CD4-positive, alpha-beta memory T cell (primary cell): ENCODE measurements at regions of chr12 and their contacts with region 1.

Region 1: GRCh38 chr12:104456417-104456949 is at the start of gene CHST11:
- DNase-seq: peak; percentile 66 to 85 (median 70)
- H3K4me3 ChIP-seq: peak within 1 kb of the TSS; percentile 72 to 99
- H3K4me3 Mint-ChIP-seq: peak within 1 kb of the TSS; percentile 98 to 100 (median 99)
- H3K27ac ChIP-seq: peak within 1 kb of the TSS; percentile 83
- H3K27ac Mint-ChIP-seq: peak within 1 kb of the TSS; percentile 85 to 98 (median 96)
- H3K4me1 ChIP-seq: peaks cover 34% of the 10 kb centered on the region
- H3K4me1 Mint-ChIP-seq: peaks cover 28 to 66% (median 39%) of the 10 kb centered on the region in 4 donors
- H3K27me3 ChIP-seq: no peaks in the 10 kb centered on the region
- H3K27me3 Mint-ChIP-seq: no peaks in the 10 kb centered on the region
- total RNA-seq, gene CHST11: 55.1 to 55.8 TPM

Region 2: GRCh38 chr12:104026841-104027599 is 429.5 kb before region 1 on chr12:
- CTCF ChIA-PET with region 1: no interaction called
- POLR2A ChIA-PET with region 1: no interaction called
- intact Hi-C with region 1: no loop called
- DNase-seq: no peak
- H3K4me3 ChIP-seq: no peak overlapping the region
- H3K4me3 Mint-ChIP-seq: no peak overlapping the region
- H3K27ac ChIP-seq: no peak overlapping the region
- H3K27ac Mint-ChIP-seq: no peak overlapping the region
- H3K4me1 ChIP-seq: no peaks in the 10 kb centered on the region
- H3K4me1 Mint-ChIP-seq: no peaks in the 10 kb centered on the region
- H3K27me3 ChIP-seq: no peaks in the 10 kb centered on the region
- H3K27me3 Mint-ChIP-seq: peaks cover 18 to 19% of the 10 kb centered on the region in 2 donors

Region 3: GRCh38 chr12:104079024-104079423 is 377.5 kb before region 1 on chr12:
- CTCF ChIA-PET with region 1: no interaction called
- POLR2A ChIA-PET with region 1: no interaction called
- intact Hi-C with region 1: no loop called
- DNase-seq: no peak
- H3K4me3 ChIP-seq: no peak overlapping the region
- H3K4me3 Mint-ChIP-seq: no peak overlapping the region
- H3K27ac ChIP-seq: no peak overlapping the region
- H3K27ac Mint-ChIP-seq: no peak overlapping the region
- H3K4me1 ChIP-seq: no peaks in the 10 kb centered on the region
- H3K4me1 Mint-ChIP-seq: peaks cover 6 to 20% (median 18%) of the 10 kb centered on the region in 4 donors
- H3K27me3 ChIP-seq: no peaks in the 10 kb centered on the region
- H3K27me3 Mint-ChIP-seq: no peaks in the 10 kb centered on the region

Region 4: DNA sequence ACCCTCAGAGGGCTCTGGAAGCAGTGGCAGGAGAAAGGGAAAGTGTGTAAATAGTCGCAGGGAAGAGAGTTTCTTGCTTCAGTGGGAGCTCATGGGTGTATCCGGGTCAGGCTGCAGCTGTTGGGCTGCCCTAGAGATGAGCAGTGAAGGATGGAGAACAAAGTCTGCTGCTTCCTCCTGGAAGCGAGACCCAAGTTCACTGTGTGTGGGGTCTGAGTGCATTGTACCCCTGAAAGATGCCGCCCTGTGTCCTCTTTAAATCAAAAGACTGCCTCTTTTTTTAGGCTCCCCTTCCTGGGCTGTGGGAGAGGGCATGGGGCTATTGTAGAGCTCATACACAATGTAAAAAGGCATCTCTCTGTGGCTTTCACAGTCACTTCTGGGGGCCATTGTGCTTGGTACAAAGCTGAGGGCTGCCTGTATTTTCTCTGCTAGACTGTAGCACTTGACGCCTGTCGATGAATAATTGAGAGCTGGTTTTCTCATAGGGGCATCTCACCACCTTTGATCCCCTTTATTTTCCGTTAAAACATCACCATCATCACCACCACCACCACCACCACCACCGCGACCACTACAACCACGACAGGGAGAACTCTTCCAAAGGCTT is 17.0 kb after region 1 on chr12:
- CTCF ChIA-PET with region 1: interaction called, 23 read pairs
- POLR2A ChIA-PET with region 1: interaction called, 172 read pairs
- intact Hi-C with region 1: no loop called
- DNase-seq: no peak
- H3K4me3 ChIP-seq: no peak overlapping the region
- H3K4me3 Mint-ChIP-seq: peak overlapping the region; percentile 7 to 88 (median 74)
- H3K27ac ChIP-seq: no peak overlapping the region
- H3K27ac Mint-ChIP-seq: peak overlapping the region; percentile 72 to 91 (median 83)
- H3K4me1 ChIP-seq: peaks cover 88% of the 10 kb centered on the region
- H3K4me1 Mint-ChIP-seq: peaks cover 75 to 91% (median 83%) of the 10 kb centered on the region in 4 donors
- H3K27me3 ChIP-seq: no peaks in the 10 kb centered on the region
- H3K27me3 Mint-ChIP-seq: no peaks in the 10 kb centered on the region

Region 5: DNA sequence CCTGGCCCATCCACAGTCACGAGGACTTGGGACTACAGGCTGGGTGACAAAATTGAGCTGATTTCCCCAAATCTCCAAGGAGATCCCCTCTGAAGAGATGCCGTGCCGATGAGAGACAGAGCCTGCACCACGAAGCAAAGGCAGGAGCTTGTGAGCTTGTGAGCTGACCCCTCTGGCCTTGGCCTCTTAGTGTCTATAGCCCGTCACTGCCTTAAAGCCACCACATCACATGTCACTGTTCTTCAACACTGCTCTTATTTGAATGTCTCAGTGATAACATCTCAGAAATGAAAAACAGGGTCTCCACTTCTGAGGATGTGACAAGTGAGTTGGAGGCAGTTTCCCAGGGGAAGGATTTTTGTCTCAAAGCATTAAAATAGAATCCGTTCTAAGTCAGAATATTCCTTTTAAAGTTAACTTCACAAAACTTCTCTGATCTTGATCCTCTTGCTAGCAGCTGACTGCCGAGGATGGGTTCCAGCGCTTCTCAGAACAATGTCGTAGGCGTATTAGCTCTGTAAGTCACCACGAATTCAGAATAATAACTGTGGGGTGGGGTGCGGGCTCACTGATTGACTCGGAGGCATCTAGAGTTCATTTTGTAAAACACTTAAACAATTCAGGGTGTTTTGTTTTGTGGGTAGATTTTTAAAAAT is 37.8 kb after region 1 on chr12:
- CTCF ChIA-PET with region 1: interaction called, 10 read pairs
- POLR2A ChIA-PET with region 1: interaction called, 71 read pairs
- intact Hi-C with region 1: loop called (anchors 1 kb)
- DNase-seq: peak; percentile 29 to 76 (median 42)
- H3K4me3 ChIP-seq: peak overlapping the region in 1 of 2 donors; percentile 32
- H3K4me3 Mint-ChIP-seq: peak overlapping the region; percentile 66 to 94 (median 84)
- H3K27ac ChIP-seq: peak overlapping the region; percentile 50
- H3K27ac Mint-ChIP-seq: peak overlapping the region; percentile 88 to 99 (median 94)
- H3K4me1 ChIP-seq: peaks cover 93% of the 10 kb centered on the region
- H3K4me1 Mint-ChIP-seq: peaks cover 77 to 96% (median 86%) of the 10 kb centered on the region in 4 donors
- H3K27me3 ChIP-seq: no peaks in the 10 kb centered on the region
- H3K27me3 Mint-ChIP-seq: no peaks in the 10 kb centered on the region

Region 6: GRCh38 chr12:104604070-104604994 is 147.8 kb after region 1 on chr12:
- CTCF ChIA-PET with region 1: interaction called, 21 read pairs
- POLR2A ChIA-PET with region 1: interaction called, 20 read pairs
- intact Hi-C with region 1: loop called (anchors 2 kb)
- DNase-seq: peak; percentile 47 to 77 (median 66)
- H3K4me3 ChIP-seq: no peak overlapping the region
- H3K4me3 Mint-ChIP-seq: peak overlapping the region; percentile 16 to 81 (median 50)
- H3K27ac ChIP-seq: peak overlapping the region; percentile 52
- H3K27ac Mint-ChIP-seq: peak overlapping the region; percentile 68 to 96 (median 90)
- H3K4me1 ChIP-seq: peaks cover 48% of the 10 kb centered on the region
- H3K4me1 Mint-ChIP-seq: peaks cover 61 to 90% (median 75%) of the 10 kb centered on the region in 4 donors
- H3K27me3 ChIP-seq: no peaks in the 10 kb centered on the region
- H3K27me3 Mint-ChIP-seq: no peaks in the 10 kb centered on the region

Region 7: DNA sequence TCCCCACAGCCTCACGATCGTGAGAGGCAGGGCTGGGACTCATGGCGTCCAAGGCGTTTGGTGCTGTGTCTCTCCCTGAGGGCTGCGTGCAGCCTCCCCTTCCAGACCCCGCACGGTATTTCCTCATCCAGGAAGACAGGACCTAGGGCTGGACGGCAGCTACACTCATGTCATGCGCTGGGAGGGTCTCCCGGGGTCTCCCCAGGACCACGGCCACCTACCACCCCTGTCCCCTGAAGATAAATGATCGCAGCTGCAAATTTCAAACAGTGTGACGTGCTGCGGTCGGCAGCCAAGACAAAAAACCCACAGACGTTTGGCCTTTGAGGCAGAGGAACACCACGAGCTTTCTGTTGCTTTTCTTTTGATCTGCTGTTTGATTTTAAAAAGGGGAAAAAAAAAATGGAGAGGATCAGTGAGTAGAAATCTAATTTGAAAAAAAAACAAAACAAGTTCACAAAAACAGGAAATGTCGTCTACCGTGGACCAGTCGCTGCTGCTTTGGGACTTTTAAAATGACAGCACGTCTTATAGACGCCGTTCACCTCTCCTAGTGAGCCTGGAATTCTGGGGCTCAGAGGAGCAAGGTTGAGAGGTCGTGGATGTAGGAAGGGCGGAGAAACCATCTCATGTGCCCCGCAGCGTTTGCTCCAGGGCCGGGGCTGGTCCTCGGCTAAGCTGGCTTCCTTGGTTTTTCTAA is 264.0 kb after region 1 on chr12:
- CTCF ChIA-PET with region 1: interaction called, 18 read pairs
- POLR2A ChIA-PET with region 1: interaction called, 22 read pairs
- intact Hi-C with region 1: loop called (anchors 2 kb)
- DNase-seq: peak; percentile 87 to 92 (median 88)
- H3K4me3 ChIP-seq: peak overlapping the region; percentile 31 to 54
- H3K4me3 Mint-ChIP-seq: peak overlapping the region; percentile 65 to 90 (median 83)
- H3K27ac ChIP-seq: peak overlapping the region; percentile 78
- H3K27ac Mint-ChIP-seq: peak overlapping the region; percentile 92 to 99 (median 96)
- H3K4me1 ChIP-seq: peaks cover 37% of the 10 kb centered on the region
- H3K4me1 Mint-ChIP-seq: peaks cover 42 to 74% (median 55%) of the 10 kb centered on the region in 4 donors
- H3K27me3 ChIP-seq: no peaks in the 10 kb centered on the region
- H3K27me3 Mint-ChIP-seq: no peaks in the 10 kb centered on the region

Region 8: DNA sequence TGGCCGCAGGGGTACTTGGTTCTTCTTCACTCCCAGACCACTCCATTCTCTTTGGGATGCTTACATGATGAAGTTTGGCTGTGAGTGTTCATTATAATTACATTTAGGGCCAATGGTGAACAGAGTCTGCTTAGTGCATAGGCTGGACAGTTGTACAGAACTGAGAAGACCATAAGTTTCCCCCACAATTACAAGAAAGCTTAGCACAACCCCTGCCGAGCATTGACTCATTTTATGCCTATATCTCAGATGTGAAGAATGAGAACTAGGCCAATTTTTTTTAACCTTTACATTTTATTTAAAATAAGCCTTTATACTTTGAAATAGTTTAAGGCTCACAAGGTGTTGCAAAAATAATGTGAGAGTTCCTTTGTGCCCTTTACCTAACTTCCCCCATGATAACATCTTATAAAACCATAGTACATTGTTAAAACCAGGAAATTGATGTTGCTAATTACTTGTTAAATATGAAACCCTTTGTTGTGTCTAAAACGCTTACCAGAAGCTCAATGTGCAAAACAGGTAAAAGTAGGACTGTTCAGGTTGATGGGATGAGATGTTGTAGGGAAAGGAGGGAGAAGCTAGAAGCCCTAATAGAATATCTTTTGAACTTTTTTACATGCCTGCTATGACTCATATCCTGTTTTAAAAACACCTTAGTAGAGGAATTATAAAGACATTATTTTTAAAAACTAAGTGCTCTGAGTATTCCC is 580.6 kb after region 1 on chr12:
- CTCF ChIA-PET with region 1: no interaction called
- POLR2A ChIA-PET with region 1: no interaction called
- intact Hi-C with region 1: loop called (anchors 5 kb)
- DNase-seq: peak in 4 of 5 donors; percentile 10 to 35 (median 25)
- H3K4me3 ChIP-seq: no peak overlapping the region
- H3K4me3 Mint-ChIP-seq: peak overlapping the region; percentile 43 to 89 (median 76)
- H3K27ac ChIP-seq: peak overlapping the region; percentile 43
- H3K27ac Mint-ChIP-seq: peak overlapping the region; percentile 65 to 98 (median 94)
- H3K4me1 ChIP-seq: peaks cover 23% of the 10 kb centered on the region
- H3K4me1 Mint-ChIP-seq: peaks cover 21 to 42% (median 28%) of the 10 kb centered on the region in 4 donors
- H3K27me3 ChIP-seq: no peaks in the 10 kb centered on the region
- H3K27me3 Mint-ChIP-seq: no peaks in the 10 kb centered on the region